Activated naive CD8-positive, alpha-beta T cell treated with anti-CD3 and anti-CD28 coated beads, Interleukin-2, amount 10 ng/mL, durations not matched to agents 7 days and 5 days (primary cell): ENCODE measurements at regions of chrX and their contacts with region 1.

Region 1: GRCh38 chrX:54639346-54640102 is 109.5 kb downstream of the GNL3L start:
- DNase-seq: peak; percentile 85
- ATAC-seq: peak; percentile 94
- H3K4me3 Mint-ChIP-seq: peak overlapping the region; percentile 88
- H3K27ac Mint-ChIP-seq: peak overlapping the region; percentile 94
- H3K4me1 Mint-ChIP-seq: peaks cover 5% of the 10 kb centered on the region
- H3K27me3 Mint-ChIP-seq: no peaks in the 10 kb centered on the region

Region 2: GRCh38 chrX:54602563-54602962 is 37.0 kb before region 1 on chrX:
- POLR2A ChIA-PET with region 1: no interaction called
- DNase-seq: no peak
- ATAC-seq: no peak
- H3K4me3 Mint-ChIP-seq: no peak overlapping the region
- H3K27ac Mint-ChIP-seq: no peak overlapping the region
- H3K4me1 Mint-ChIP-seq: peaks cover 2% of the 10 kb centered on the region
- H3K27me3 Mint-ChIP-seq: no peaks in the 10 kb centered on the region

Region 3: DNA sequence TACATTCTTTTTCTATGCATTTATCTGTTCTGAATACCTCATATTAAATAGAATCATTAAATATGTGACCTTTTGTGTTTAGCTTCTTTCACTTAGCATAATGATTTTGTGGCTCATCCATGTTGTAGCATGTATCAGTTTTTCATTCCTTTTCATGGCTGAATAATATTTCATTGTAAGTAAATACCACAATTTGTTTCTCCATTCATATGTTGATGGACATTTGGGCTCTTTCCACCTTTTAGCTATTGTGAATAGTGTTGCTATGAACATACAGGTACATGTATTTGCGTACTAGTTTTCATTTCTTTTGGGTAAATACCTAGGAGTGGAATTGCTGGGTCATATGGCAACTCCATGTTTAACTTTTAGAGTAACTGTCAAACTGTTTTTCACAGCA is 24.4 kb before region 1 on chrX:
- POLR2A ChIA-PET with region 1: no interaction called
- DNase-seq: no peak
- ATAC-seq: no peak
- H3K4me3 Mint-ChIP-seq: no peak overlapping the region
- H3K27ac Mint-ChIP-seq: no peak overlapping the region
- H3K4me1 Mint-ChIP-seq: no peaks in the 10 kb centered on the region
- H3K27me3 Mint-ChIP-seq: no peaks in the 10 kb centered on the region

Region 4: DNA sequence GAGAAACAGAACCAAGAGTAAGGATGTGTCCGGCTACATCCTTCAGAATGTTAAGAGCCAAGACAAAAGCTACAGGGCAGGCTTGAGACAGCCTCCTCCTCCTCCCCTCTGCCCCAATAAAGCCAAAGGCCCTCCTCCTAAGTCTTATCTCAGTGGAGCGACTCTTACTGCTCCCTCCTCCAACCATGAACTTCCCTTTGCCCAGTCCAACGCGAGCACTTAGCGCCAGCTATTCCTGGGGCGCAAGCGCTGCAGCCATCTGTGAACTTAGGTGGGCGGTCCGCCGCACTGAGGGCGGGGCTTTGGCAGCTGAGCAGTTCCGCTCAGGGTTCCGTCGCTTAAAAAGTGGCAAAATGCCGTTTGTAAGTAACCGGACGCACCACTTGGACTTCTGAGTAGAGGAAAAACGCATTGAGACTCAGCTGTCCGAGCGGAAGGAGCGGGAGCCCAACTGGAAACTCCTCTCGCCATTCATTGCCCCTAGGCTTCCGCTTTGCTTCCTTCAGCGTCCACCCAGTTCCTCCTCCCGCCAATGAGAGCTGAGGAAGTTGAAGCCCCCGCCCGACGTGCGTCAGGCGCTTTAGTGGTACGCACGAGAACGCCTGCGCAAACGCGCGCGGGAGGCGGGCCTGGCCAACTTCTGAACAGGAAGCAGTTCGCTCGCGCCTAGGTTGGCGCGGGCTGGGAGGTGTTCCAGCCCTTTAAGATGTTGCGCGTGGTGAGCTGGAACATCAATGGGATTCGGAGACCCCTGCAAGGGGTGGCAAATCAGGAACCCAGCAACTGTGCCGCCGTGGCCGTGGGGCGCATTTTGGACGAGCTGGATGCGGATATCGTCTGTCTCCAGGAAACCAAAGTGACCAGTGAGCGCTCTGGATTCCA is 360.4 kb after region 1 on chrX and contains the start of gene APEX2:
- POLR2A ChIA-PET with region 1: interaction called, 12 read pairs
- DNase-seq: peak; percentile 84
- ATAC-seq: peak; percentile 95
- H3K4me3 Mint-ChIP-seq: peak within 1 kb of the TSS; percentile 98
- H3K27ac Mint-ChIP-seq: peak within 1 kb of the TSS; percentile 94
- H3K4me1 Mint-ChIP-seq: peaks cover 23% of the 10 kb centered on the region
- H3K27me3 Mint-ChIP-seq: no peaks in the 10 kb centered on the region
- total RNA-seq, gene APEX2: 23.7 to 25.2 TPM